ENCODE measurements at regions of chr13 and their contacts with region 1.

Region 1: DNA sequence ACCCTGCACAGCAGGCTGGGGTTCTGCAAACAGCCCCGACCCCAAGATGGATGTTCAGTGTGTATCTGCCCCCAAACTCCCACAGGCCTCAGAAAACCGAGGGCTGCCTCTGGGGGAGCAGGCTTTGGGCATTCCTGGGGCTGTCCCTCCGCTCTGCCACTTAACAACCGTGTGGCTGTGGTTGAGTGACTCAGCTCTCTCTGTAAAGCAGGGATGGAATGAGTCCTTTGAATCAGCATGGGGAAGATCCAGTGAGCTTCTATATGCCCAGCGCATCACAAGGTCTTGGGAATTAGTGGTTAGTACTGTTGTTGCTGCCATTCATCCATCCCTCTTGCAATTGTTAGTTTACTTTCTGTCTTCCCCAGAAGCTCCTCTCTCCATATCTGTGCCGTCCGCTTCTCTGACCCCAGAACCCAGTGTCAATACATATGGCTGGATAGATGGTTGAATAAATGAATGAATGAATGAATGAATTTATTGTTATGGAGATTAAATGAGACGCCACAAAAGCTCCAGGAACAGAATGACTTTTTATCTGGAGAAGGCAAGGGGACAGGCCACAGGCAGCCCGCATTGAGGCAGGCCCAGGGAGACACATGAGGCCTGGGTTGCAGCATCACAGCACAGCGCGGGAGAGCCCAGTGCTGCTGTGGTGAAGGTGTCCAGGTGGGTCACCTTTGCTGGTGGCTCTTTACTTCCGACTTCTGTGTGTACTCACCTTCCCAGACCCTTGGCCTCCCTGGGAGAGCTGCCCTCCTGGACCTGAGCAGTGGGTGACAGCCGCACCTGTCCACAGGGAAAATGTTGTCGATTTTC is 89.2 kb downstream of the RGCC start:
- DNase-seq: no peak
- ATAC-seq: no peak

Region 2: GRCh38 chr13:39815345-39816111 is 1731.1 kb before region 1 on chr13:
- intact Hi-C with region 1: no loop called
- DNase-seq: no peak
- ATAC-seq: peak; percentile 57

Region 3: GRCh38 chr13:41456768-41457588 is 89.6 kb before region 1 on chr13 and contains the start of gene RGCC:
- intact Hi-C with region 1: loop called (anchors 5 kb)
- DNase-seq: peak; percentile 94
- ATAC-seq: peak; percentile 90
- total RNA-seq, gene RGCC: 41.4 TPM

Region 4: GRCh38 chr13:41492404-41493260 is 53.9 kb before region 1 on chr13:
- intact Hi-C with region 1: loop called (anchors 2 kb)
- DNase-seq: no peak
- ATAC-seq: no peak

Region 5: DNA sequence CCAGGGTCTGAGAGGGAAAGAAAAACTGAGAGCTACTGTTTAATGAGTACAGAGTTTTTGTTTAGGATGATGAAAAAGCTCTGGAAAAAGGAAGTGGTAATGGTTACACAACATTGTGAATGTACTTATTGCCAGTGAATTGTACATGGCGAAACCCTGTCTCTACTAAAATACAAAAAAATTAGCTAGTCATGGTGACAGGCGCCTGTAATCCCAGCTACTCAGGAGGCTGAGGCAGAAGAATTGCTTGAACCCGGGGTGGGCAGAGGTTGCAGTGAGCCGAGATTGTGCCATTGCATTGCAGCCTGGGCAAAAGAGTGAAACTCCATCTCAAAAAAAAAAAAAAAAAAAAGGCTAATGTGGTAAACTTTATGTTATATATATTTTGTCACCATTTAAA is 318.1 kb after region 1 on chr13:
- intact Hi-C with region 1: no loop called
- DNase-seq: no peak
- ATAC-seq: no peak